Mammary epithelial cell (primary cell): ENCODE measurements at regions of chr9 and their contacts with region 1.

Region 1: DNA sequence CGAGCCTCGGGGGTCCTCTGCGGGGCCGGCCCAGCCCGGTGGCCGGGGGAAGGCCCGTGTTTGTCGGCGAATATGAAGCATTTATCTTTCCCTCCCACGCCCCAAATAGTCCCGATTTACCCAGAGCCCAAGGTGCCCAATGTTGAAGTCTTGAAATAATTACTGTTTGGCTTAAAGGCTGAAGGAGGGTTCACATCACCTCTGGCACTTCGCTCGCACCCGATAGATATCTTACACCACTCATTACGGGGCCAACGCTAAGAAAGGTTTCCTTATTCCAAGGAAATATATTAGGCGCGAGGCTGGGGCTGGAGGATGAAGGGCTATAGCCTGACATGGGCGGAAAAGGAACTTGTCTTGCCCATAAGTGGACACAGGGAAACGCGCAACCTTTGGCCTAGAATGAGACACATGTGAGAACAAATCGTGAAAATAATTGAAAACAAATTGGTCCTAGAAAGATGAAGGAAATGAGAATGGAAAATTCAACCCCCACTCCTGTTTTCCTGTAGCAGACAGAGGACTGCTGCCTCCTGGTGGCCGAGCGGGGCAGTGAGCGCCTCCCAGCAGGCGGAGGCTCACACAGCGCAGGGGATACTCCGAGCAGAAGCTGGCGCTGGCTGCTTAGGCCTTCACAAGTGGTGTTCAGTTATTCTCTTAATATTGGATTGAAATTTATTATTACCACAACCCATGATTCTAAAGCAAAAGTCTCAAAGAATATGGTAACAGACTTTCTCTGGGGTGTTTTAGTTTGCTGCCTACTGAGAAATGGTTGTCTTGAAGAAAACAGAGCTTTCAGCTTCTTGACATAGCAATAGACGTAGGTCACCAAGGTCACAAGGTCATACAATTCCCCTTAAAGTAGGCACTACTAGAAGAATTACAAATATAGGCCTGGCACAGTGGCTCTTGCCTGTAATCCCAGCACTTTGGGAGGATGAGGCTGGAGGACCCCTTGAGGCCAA is 7.9 kb downstream of the CCL21 start:
- DNase-seq: peak; percentile 61
- H3K4me3 ChIP-seq: peak overlapping the region; percentile 51 to 60 (median 60)
- H3K27ac ChIP-seq: no peak overlapping the region
- H3K4me1 ChIP-seq: peaks cover 5% of the 10 kb centered on the region
- H3K27me3 ChIP-seq: no peaks in the 10 kb centered on the region
- CTCF ChIP-seq: peak; percentile 99

Region 2: DNA sequence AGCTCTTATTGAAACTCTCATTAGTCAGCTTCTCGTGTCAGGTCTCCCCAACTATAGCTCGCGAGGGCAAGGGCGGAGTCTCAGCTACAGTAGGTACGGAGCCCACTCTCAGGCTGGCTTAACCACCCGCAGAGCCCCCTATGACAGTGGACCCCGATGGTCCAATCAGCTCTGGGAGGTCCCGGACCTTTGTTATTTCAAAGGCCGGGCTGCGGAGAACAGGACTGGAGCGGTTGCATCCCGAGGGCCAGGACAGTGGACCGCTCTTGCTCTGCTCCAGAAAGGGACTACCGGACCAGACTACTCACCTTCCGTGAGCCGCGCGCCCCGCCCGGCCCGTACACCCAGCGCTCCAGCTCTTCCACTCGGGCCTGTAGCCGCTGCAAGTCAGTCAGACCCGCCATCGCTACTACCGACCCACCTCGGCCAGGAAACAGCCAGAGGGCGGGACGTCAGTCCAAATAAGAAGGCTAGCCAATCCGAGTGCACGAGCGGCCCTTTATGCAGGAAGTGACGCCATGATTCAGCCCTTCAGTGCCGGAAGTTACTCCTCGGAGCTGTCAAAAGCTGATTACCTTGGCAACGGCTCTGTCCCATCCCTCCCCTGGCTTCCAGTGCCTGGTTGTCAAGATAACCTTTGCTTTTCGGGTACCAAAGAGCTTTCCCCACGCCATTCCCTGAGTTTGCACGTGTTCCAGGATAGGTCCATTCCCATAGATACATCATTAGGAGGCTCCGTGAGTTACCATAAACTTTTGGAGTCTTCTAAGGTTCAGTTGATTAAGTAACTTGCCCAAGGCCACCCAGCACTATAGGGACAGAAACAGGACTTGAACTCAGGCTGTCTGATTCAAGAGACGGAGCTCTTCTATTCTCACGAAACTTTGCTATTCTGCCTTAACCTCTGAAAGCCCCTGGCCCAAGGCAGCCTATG is 81.7 kb before region 1 on chr9 and contains the start of gene DCTN3:
- CTCF ChIA-PET with region 1: no interaction called
- dilution Hi-C with region 1: no loop called
- in situ Hi-C with region 1: no loop called
- intact Hi-C with region 1: no loop called
- DNase-seq: peak; percentile 86
- H3K4me3 ChIP-seq: peak within 1 kb of the TSS; percentile 71 to 79 (median 77)
- H3K27ac ChIP-seq: peak within 1 kb of the TSS; percentile 62
- H3K4me1 ChIP-seq: peaks cover 6% of the 10 kb centered on the region
- H3K27me3 ChIP-seq: no peaks in the 10 kb centered on the region
- CTCF ChIP-seq: no peak
- total RNA-seq, gene DCTN3: 53.8 to 91.3 TPM

Region 3: DNA sequence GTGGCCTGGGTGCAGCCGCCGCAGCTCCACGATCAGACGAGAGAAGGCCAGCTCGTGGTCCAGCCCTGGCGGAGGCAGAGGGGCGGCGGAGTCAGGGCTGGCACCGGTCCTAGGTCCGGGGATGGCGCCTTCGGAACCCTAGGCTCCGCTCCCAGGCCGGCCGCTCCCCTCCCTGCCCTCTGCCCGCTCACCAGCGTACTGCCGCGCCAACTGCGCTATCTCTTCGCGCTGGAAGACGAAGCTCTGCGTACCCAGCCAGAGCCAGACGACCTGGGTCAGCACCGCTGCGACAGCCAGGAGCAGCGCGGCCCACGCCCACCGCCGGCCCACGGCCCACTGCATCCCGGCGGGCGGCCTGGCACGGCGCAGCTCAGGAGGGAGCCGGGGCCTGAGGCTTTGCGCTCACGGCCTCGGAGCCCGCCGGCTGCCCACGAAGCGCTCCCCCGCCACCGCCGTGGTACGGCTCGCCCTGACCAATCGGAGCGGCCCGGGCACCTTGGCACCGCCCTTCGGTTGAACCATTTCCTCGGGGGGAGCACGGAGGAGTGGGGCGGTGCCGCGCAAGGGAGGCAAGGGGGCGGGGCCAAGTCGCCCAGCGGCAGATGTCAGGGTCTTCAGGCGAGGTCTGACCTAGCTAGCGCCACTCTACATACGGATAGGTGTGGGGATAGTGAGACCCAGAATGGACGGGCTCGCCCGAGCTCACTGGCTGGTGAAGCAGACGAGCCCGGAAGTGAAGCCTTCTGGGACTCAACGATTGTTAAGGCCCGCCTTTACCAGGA is 64.5 kb before region 1 on chr9 and contains the start of gene SIGMAR1:
- CTCF ChIA-PET with region 1: no interaction called
- dilution Hi-C with region 1: no loop called
- in situ Hi-C with region 1: no loop called
- intact Hi-C with region 1: loop called (anchors 1 kb)
- DNase-seq: peak; percentile 94
- H3K4me3 ChIP-seq: peak within 1 kb of the TSS; percentile 62 to 91 (median 88)
- H3K27ac ChIP-seq: peak within 1 kb of the TSS; percentile 35
- H3K4me1 ChIP-seq: peaks cover 4% of the 10 kb centered on the region
- H3K27me3 ChIP-seq: no peaks in the 10 kb centered on the region
- CTCF ChIP-seq: no peak
- total RNA-seq, gene SIGMAR1: 83.0 to 131 TPM

Region 4: GRCh38 chr9:34675048-34675714 is 26.9 kb before region 1 on chr9:
- CTCF ChIA-PET with region 1: no interaction called
- dilution Hi-C with region 1: no loop called
- in situ Hi-C with region 1: no loop called
- intact Hi-C with region 1: loop called (anchors 1 kb)
- DNase-seq: peak; percentile 47
- H3K4me3 ChIP-seq: no peak overlapping the region
- H3K27ac ChIP-seq: no peak overlapping the region
- H3K4me1 ChIP-seq: no peaks in the 10 kb centered on the region
- H3K27me3 ChIP-seq: no peaks in the 10 kb centered on the region
- CTCF ChIP-seq: peak; percentile 50 to 53

Region 5: GRCh38 chr9:34809504-34810186 is 107.6 kb after region 1 on chr9:
- CTCF ChIA-PET with region 1: no interaction called
- dilution Hi-C with region 1: no loop called
- in situ Hi-C with region 1: no loop called
- intact Hi-C with region 1: loop called (anchors 5 kb)
- DNase-seq: peak; percentile 9
- H3K4me3 ChIP-seq: peak overlapping the region in 2 of 3 experiments; percentile 27 to 40
- H3K27ac ChIP-seq: no peak overlapping the region
- H3K4me1 ChIP-seq: peaks cover 7% of the 10 kb centered on the region
- H3K27me3 ChIP-seq: peaks cover 4% of the 10 kb centered on the region
- CTCF ChIP-seq: peak; percentile 35 to 56

Region 6: DNA sequence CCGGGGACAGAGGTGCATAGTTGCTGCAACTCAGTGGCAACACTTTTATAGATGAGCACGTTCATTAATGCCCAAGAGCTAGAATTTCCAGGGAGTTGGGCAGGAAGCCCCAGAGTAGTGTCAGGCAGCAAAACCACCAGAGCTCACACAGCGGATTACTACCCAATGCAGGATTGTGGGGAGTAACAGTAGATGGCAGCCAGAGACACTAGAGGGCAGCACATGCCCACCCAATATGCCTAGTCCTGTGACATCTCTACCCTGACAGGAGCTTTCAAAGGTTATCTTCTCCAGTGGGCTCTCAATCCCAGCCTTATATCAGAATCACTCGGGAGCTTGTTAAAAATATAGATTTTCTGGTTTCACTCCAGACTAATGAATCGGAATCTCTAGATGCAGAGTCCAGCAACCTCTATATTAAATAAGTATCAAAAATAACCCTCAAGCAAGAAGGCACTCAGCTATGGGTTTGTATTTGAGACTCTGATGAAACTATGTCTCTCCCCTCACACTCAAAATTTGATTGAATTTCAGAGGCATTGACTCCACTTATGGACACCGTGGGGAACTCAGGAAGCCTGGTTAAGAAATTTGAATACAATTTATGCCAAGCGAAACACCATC is 197.6 kb after region 1 on chr9:
- CTCF ChIA-PET with region 1: no interaction called
- dilution Hi-C with region 1: no loop called
- in situ Hi-C with region 1: loop called in 1 of 2 experiments (anchors 10 kb)
- intact Hi-C with region 1: loop called (anchors 1 kb)
- DNase-seq: peak; percentile 60
- H3K4me3 ChIP-seq: no peak overlapping the region
- H3K27ac ChIP-seq: no peak overlapping the region
- H3K4me1 ChIP-seq: no peaks in the 10 kb centered on the region
- H3K27me3 ChIP-seq: peaks cover 2% of the 10 kb centered on the region
- CTCF ChIP-seq: peak; percentile 74 to 89